Colonic mucosa (tissue), 4 donors: ENCODE measurements at regions of chr1 and their contacts with region 1.

Region 1: DNA sequence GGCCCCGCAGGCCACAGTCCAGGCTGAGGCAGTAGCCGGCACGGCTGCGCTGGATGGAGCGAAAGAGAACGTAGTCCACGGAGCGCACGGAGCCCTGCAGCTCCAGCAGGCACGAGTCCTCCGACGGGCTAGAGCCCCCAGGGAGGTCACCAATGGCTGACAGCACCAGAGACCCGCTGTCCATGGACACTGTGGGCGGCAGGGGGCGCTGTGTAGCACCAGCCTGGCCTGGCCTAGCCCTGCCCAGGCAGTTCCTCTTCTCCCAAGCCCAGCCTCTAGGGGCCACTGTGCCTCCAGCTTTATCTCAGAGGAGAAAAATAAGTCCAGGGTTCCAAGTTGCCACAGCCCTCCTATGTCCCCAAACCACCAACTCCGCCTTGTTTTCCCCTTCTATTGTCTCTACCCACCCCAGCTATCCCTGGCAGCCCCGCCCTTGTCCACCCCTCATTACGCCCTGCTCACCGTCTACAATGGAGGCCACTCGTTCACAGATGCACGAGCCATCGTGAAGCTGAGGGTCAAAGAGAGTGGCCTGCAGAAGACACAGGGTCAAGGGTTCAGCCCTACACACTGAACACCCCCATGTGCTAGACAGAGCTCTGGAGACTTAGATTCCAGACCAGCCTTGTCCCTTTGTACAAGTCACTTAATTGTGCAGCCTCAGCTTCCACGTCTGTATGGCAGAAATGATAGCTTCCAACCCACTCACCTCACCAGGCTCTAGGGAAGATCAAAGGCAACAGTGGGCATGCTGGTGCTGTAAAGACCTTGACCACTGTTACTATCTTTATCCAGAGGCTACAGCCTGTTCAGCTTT is 4.4 kb downstream of the ENTREP3 start:
- DNase-seq: peak; percentile 95
- H3K4me3 ChIP-seq: peak overlapping the region; percentile 23
- H3K27ac ChIP-seq: no peak overlapping the region
- H3K4me1 ChIP-seq: peaks cover 12% of the 10 kb centered on the region
- H3K27me3 ChIP-seq: no peaks in the 10 kb centered on the region
- CTCF ChIP-seq: peak; percentile 100

Region 2: GRCh38 chr1:155277070-155277895 is 26.4 kb after region 1 on chr1 and contains the start of gene HCN3:
- intact Hi-C with region 1: no loop called
- DNase-seq: peak; percentile 99
- H3K4me3 ChIP-seq: peak within 1 kb of the TSS; percentile 81
- H3K27ac ChIP-seq: peak within 1 kb of the TSS; percentile 72
- H3K4me1 ChIP-seq: no peaks in the 10 kb centered on the region
- H3K27me3 ChIP-seq: no peaks in the 10 kb centered on the region
- CTCF ChIP-seq: peak; percentile 75
- total RNA-seq, gene HCN3: 12.4 to 12.8 TPM

Region 3: DNA sequence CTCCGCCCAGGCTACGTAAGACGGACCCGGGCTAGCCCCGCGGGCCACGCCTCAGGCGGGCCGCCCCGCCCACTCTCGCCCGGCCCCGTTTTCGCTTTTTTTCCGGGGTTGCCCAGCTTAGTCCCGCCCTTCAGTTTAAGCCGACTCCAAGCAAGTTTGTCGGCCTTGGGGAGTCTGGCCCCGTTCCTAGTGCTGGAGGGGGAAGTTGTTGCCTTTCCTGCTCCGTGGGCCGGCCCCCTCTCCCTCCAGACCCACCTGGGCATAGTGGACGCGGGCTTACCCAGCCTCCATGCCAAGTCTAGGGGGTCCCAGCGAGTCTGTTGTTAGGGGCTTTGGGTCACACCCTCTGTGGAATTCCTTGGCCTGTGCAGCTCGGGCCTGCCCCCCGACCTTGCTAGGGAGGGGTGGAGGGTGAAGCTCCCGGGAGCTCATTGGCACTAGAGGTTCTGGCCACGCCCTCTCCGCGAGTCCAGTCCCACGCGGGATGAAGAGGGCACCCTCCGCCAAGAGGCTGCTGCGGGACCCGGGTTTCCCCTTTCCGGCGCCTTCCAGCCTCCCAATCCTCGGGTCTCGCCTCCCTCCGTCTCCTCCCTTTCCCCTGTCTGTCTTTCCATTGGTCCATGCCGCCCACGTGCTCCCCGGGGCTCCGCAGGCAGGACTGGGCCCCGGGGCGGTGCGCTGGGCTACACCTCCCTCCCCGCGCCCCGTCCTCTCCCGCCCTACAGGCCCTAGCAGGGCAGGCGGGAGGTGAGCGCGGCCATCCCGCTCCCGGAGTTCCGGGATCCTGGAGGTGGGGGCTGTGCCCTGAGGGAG is 73.2 kb after region 1 on chr1:
- intact Hi-C with region 1: loop called (anchors 5 kb)
- DNase-seq: peak; percentile 98
- H3K4me3 ChIP-seq: peak overlapping the region; percentile 83
- H3K27ac ChIP-seq: peak overlapping the region; percentile 96
- H3K4me1 ChIP-seq: peaks cover 20% of the 10 kb centered on the region
- H3K27me3 ChIP-seq: no peaks in the 10 kb centered on the region
- CTCF ChIP-seq: no peak

Region 4: DNA sequence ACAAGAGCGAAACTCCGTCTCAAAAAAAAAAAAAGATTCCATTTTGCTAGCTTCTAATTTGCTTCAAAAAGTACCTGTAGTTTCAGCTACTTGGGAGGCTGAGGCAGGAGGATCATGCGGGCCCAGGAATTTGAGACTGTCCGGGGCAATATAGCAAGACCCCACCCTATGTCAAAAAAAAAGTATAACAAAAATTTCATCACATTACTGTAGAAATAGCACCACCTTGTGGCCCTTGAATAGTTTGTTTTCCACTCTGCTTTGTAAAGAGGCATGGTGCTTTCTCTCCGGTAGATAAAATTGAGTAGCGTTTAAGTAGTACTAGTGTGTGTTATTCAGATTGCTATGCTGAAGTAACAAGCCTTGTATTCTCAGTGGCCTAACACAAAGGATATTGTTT is 340.9 kb after region 1 on chr1:
- intact Hi-C with region 1: loop called (anchors 2 kb)
- DNase-seq: peak; percentile 32
- H3K4me3 ChIP-seq: no peak overlapping the region
- H3K27ac ChIP-seq: no peak overlapping the region
- H3K4me1 ChIP-seq: no peaks in the 10 kb centered on the region
- H3K27me3 ChIP-seq: no peaks in the 10 kb centered on the region
- CTCF ChIP-seq: peak; percentile 53

Region 5: GRCh38 chr1:155773221-155773620 is 522.4 kb after region 1 on chr1:
- intact Hi-C with region 1: no loop called
- DNase-seq: no peak
- H3K4me3 ChIP-seq: no peak overlapping the region
- H3K27ac ChIP-seq: no peak overlapping the region
- H3K4me1 ChIP-seq: no peaks in the 10 kb centered on the region
- H3K27me3 ChIP-seq: no peaks in the 10 kb centered on the region
- CTCF ChIP-seq: no peak